Left cardiac atrium (tissue), 4 donors: ENCODE measurements at regions of chr9 and their contacts with region 1.

Region 1: DNA sequence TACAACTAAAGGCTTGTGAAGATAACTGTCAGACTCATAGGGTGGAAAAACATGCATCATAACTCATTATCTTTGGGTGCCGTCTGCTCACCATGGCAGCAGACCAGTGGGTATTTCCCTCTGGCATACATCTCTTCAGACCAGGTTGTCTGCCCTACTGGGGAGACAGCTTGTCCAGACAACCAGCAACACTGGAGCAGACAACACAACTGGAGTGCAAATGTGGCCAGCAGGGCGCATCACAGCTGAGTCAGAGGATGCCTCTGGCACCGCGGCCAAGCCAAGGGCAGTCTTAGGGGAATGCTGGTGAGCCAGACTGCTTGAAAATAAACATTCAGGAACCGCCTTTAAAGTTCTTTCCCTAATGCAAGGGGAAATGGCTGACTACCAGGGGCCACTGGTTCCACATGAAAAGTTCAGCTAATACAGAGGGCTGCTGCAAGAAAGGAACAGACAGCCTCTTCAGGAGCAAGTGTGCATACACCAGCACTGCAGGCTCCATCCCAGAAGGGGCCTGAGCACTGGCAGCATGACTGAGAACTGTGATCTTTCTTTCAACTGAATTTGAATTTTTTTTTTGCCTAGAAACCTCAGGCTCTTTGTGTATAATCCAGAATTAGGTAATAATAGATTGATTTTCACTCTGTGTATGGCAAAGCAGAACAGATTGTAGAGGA is 77.3 kb downstream of the MAMDC2 start:
- DNase-seq: peak; percentile 79
- ATAC-seq: peak; percentile 90 to 96

Region 2: GRCh38 chr9:70218767-70219166 is 97.8 kb after region 1 on chr9:
- intact Hi-C with region 1: loop called (anchors 10 kb)
- DNase-seq: no peak
- ATAC-seq: no peak

Region 3: DNA sequence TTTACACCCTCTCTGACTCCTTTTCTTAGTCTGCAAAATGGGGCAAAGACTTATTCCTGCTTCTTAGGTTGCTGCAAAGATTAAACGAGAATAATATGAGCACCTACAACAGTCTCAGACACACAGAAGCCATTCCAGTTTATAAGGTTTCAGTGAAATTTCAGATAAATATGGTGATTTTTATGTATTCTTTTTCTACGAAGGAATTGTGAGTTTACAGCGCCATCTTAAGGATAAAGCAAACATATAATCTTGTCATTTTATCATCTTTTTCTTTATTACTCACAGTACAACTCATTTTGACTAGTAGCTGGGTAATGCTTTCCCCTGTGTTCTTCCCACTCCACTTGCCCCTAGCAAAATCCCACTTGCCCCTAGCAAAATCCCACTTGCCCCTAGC is 108.6 kb after region 1 on chr9:
- intact Hi-C with region 1: loop called in 1 of 2 experiments (anchors 10 kb)
- DNase-seq: no peak
- ATAC-seq: peak; percentile 35 to 51

Region 4: DNA sequence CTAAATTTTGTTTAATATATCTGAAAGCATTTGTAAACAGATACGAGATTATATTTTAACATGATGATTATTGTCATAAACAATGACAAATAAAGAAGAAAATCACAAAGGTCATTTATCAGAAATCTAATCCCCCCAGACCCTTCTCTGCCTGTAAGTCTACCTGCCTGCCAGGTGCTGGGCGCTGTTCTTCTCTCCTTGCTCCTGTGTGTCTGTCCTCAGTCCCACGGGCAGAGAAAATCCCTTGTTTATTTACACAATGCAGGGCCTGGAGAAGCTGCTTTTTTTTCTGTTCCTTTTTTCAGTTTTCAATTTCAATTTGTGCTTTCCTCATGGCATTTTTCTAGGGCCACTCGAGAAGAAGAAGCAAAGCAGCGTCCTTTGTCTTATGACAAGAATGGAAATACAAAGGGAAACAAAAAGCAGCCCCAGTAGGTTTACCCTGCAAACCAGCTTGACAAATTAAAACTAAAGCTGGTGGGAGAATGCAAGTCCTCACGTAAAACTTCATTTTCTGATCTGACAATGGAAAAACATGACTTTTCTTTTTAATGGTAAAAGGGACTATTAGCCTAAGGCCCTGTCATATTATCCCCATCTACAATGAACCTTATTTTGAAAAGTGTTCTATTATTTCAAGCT is 575.8 kb after region 1 on chr9:
- intact Hi-C with region 1: no loop called
- DNase-seq: no peak
- ATAC-seq: no peak